K562 (cell line): ENCODE measurements at regions of chr22 and their contacts with region 1.

Region 1: GRCh38 chr22:20885557-20886323 is 26.9 kb downstream of the SNAP29 start:
- DNase-seq: peak; percentile 97 to 98 (median 98)
- ATAC-seq: peak; percentile 99
- H3K4me3 ChIP-seq: no peak overlapping the region
- H3K27ac ChIP-seq: peak overlapping the region; percentile 38
- H3K4me1 ChIP-seq: peaks cover 12 to 14% of the 10 kb centered on the region in 2 experiments
- H3K27me3 ChIP-seq: no peaks in the 10 kb centered on the region
- CTCF ChIP-seq: peak; percentile 99 to 100 (median 99)
- EP300 ChIP-seq: peak; percentile 10; the same call in 1 of the 2 replicates
- POLR2A ChIP-seq: no peak; the same call in 1 of the 2 replicates
- RAD21 ChIP-seq: peak; percentile 100

Region 2: DNA sequence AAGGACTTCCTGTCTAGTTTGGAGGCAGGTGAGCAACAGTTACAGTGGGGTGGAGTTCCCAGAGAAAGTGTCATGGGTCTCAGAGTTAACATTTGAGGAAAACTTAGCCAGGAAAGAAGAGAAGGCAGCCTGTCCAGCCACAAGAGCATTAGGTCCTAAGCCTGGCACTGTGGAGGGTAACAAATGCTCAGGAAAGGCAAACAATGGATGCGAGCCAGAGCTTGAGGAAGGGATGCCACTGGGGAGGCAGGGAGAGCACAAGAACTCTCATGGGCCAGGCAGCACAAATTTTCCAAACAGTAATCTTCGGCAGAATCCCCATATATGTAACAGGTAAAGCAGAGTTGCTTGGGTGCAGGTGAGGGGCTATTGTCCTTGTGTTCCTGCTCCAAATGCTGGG is 119.8 kb before region 1 on chr22:
- CTCF ChIA-PET with region 1: no interaction called
- POLR2A ChIA-PET with region 1: no interaction called
- in situ Hi-C with region 1: no loop called
- intact Hi-C with region 1: no loop called
- DNase-seq: no peak
- ATAC-seq: no peak
- H3K4me3 ChIP-seq: no peak overlapping the region
- H3K27ac ChIP-seq: no peak overlapping the region
- H3K4me1 ChIP-seq: peaks cover 7 to 10% of the 10 kb centered on the region in 2 experiments; a peak in 4 of 5 replicates
- H3K27me3 ChIP-seq: no peaks in the 10 kb centered on the region
- CTCF ChIP-seq: no peak
- EP300 ChIP-seq: no peak
- POLR2A ChIP-seq: no peak
- RAD21 ChIP-seq: no peak

Region 3: GRCh38 chr22:20793748-20794637 is 91.7 kb before region 1 on chr22:
- CTCF ChIA-PET with region 1: interaction called, 9 read pairs
- POLR2A ChIA-PET with region 1: interaction called, 6 read pairs
- in situ Hi-C with region 1: no loop called
- intact Hi-C with region 1: loop called (anchors 2 kb)
- DNase-seq: peak in 1 of 4 experiments; percentile 52
- ATAC-seq: peak; percentile 56
- H3K4me3 ChIP-seq: no peak overlapping the region
- H3K27ac ChIP-seq: no peak overlapping the region
- H3K4me1 ChIP-seq: 0 out of 5 replicates have a peak, but pooled peaks cover 0 to 3% of the 10 kb centered on the region in 2 experiments
- H3K27me3 ChIP-seq: no peaks in the 10 kb centered on the region
- CTCF ChIP-seq: peak; percentile 46 to 50 (median 49)
- EP300 ChIP-seq: no peak
- POLR2A ChIP-seq: no peak
- RAD21 ChIP-seq: peak in 1 of 2 experiments; percentile 46; a peak in 2 of 4 replicates

Region 4: GRCh38 chr22:20867179-20868024 is 18.3 kb before region 1 on chr22:
- CTCF ChIA-PET with region 1: interaction called, 4 read pairs
- POLR2A ChIA-PET with region 1: interaction called, 172 read pairs
- in situ Hi-C with region 1: no loop called
- intact Hi-C with region 1: loop called (anchors 1 kb)
- DNase-seq: peak; percentile 99 to 100 (median 100)
- ATAC-seq: peak; percentile 94
- H3K4me3 ChIP-seq: peak overlapping the region; percentile 8
- H3K27ac ChIP-seq: peak overlapping the region; percentile 74
- H3K4me1 ChIP-seq: peaks cover 59 to 62% of the 10 kb centered on the region in 2 experiments
- H3K27me3 ChIP-seq: no peaks in the 10 kb centered on the region
- CTCF ChIP-seq: peak in 1 of 3 experiments; percentile 15; a peak in 2 of 6 replicates
- EP300 ChIP-seq: peak; percentile 100
- POLR2A ChIP-seq: no peak
- RAD21 ChIP-seq: no peak

Region 5: DNA sequence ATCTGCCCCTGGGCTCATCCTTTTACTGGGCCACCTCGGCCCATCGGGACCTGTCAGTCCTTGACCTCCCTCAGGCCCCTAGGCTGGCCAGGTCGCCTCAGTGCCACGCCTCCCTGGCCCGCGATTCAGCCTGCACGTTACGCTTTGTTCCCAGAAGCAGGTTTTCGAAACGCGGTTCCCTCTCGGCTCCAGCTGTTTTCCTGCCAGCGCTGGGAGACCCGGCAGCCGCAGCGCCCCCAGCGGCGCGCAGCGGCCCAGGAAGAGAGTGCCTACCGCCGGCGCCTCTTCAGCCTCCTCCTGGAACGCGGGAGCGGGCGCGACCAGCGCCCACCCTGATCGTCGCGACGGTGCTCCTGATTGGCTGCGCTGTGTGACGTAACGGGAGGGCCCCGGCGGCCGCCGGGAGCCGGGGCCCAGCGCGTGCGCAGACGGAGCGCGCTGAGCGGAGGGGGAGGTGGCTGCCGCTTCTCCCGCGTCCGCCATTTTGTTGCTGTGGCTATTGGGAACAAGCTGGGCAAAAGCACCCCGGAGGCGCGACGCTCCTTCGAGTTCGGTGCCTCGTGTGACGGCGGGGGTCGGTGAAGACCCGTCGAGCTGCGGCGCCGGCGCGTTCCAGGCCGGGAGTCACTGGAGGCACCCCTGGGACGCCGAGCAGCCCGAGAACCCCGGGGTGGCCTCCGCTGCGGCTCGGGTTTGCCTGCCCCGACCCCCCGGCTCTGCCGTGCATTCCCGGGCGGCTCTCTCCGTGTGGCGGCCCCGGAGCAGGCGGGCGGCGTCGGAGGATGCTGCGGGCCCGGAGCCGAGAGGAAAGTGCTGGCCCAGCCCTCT is 31.5 kb after region 1 on chr22 and contains the start of gene CRKL:
- CTCF ChIA-PET with region 1: interaction called, 25 read pairs
- POLR2A ChIA-PET with region 1: interaction called, 1,556 read pairs
- in situ Hi-C with region 1: no loop called
- intact Hi-C with region 1: loop called (anchors 2 kb)
- DNase-seq: peak; percentile 100
- ATAC-seq: peak; percentile 93
- H3K4me3 ChIP-seq: peak within 1 kb of the TSS; percentile 67
- H3K27ac ChIP-seq: peak within 1 kb of the TSS; percentile 89
- H3K4me1 ChIP-seq: peaks cover 20 to 41% of the 10 kb centered on the region in 2 experiments
- H3K27me3 ChIP-seq: no peaks in the 10 kb centered on the region
- CTCF ChIP-seq: peak; percentile 99 to 100 (median 100)
- EP300 ChIP-seq: peak; percentile 88
- POLR2A ChIP-seq: no peak
- RAD21 ChIP-seq: no peak
- polyA plus RNA-seq, gene CRKL: 100 to 105 TPM

Region 6: GRCh38 chr22:20965104-20965887 is 79.6 kb after region 1 on chr22:
- CTCF ChIA-PET with region 1: interaction called, 6 read pairs
- POLR2A ChIA-PET with region 1: interaction called, 1,556 read pairs
- in situ Hi-C with region 1: no loop called
- intact Hi-C with region 1: loop called (anchors 1 kb)
- DNase-seq: peak in 3 of 4 experiments; percentile 65 to 97 (median 97)
- ATAC-seq: no peak
- H3K4me3 ChIP-seq: no peak overlapping the region
- H3K27ac ChIP-seq: no peak overlapping the region
- H3K4me1 ChIP-seq: peaks cover 0 to 40% of the 10 kb centered on the region in 2 experiments; a peak in 3 of 5 replicates
- H3K27me3 ChIP-seq: peaks cover 11 to 38% of the 10 kb centered on the region in 2 experiments; a peak in 4 of 5 replicates
- CTCF ChIP-seq: no peak
- EP300 ChIP-seq: no peak
- POLR2A ChIP-seq: no peak
- RAD21 ChIP-seq: no peak

Region 7: GRCh38 chr22:21030621-21031568 is 145.2 kb after region 1 on chr22:
- CTCF ChIA-PET with region 1: no interaction called
- POLR2A ChIA-PET with region 1: no interaction called
- in situ Hi-C with region 1: no loop called
- intact Hi-C with region 1: no loop called
- DNase-seq: no peak
- ATAC-seq: no peak
- H3K4me3 ChIP-seq: no peak overlapping the region
- H3K27ac ChIP-seq: no peak overlapping the region
- H3K4me1 ChIP-seq: peaks cover 0 to 54% of the 10 kb centered on the region in 2 experiments; a peak in 4 of 5 replicates
- H3K27me3 ChIP-seq: peaks cover 44 to 75% of the 10 kb centered on the region in 2 experiments; a peak in 4 of 5 replicates
- CTCF ChIP-seq: no peak
- EP300 ChIP-seq: no peak
- POLR2A ChIP-seq: no peak
- RAD21 ChIP-seq: no peak

Region 8: GRCh38 chr22:21062684-21063083 is 176.9 kb after region 1 on chr22:
- CTCF ChIA-PET with region 1: no interaction called
- POLR2A ChIA-PET with region 1: no interaction called
- in situ Hi-C with region 1: no loop called
- intact Hi-C with region 1: no loop called
- DNase-seq: no peak
- ATAC-seq: no peak
- H3K4me3 ChIP-seq: no peak overlapping the region
- H3K27ac ChIP-seq: no peak overlapping the region
- H3K4me1 ChIP-seq: no peaks in the 10 kb centered on the region
- H3K27me3 ChIP-seq: peaks cover 42 to 48% of the 10 kb centered on the region in 2 experiments
- CTCF ChIP-seq: no peak
- EP300 ChIP-seq: no peak
- POLR2A ChIP-seq: no peak
- RAD21 ChIP-seq: no peak